Cardiac septum (tissue), 1 donor: ENCODE measurements at regions of chr14 and their contacts with region 1.

Region 1: GRCh38 chr14:77000340-77001270 is 27.9 kb downstream of the IRF2BPL start:
- DNase-seq: no peak

Region 2: GRCh38 chr14:76968621-76969063 is 32.0 kb before region 1 on chr14:
- intact Hi-C with region 1: loop called (anchors 5 kb)
- DNase-seq: no peak